CD14-positive monocyte (primary cell): ENCODE measurements at regions of chr19 and their contacts with region 1.

Region 1: GRCh38 chr19:48970923-48971395 is 5.8 kb downstream of the FTL start:
- DNase-seq: peak; percentile 76 to 88 (median 87)
- H3K4me3 ChIP-seq: no peak overlapping the region
- H3K4me3 Mint-ChIP-seq: no peak overlapping the region
- H3K27ac ChIP-seq: no peak overlapping the region
- H3K27ac Mint-ChIP-seq: peak overlapping the region in 2 of 7 donors; percentile 24 to 71
- H3K4me1 ChIP-seq: peaks cover 36 to 45% of the 10 kb centered on the region in 2 donors
- H3K4me1 Mint-ChIP-seq: peaks cover 38% of the 10 kb centered on the region
- H3K27me3 ChIP-seq: no peaks in the 10 kb centered on the region
- H3K27me3 Mint-ChIP-seq: peaks cover 0 to 11% (median 0%) of the 10 kb centered on the region in 3 donors
- CTCF ChIP-seq: peak; percentile 94

Region 2: GRCh38 chr19:48780631-48781391 is 190.1 kb before region 1 on chr19:
- intact Hi-C with region 1: loop called in 1 of 2 experiments (anchors 5 kb)
- DNase-seq: peak; percentile 72 to 91 (median 81)
- H3K4me3 ChIP-seq: no peak overlapping the region
- H3K4me3 Mint-ChIP-seq: peak overlapping the region in 1 of 2 donors; percentile 3
- H3K27ac ChIP-seq: peak overlapping the region; percentile 52 to 69
- H3K27ac Mint-ChIP-seq: peak overlapping the region; percentile 68 to 93 (median 82)
- H3K4me1 ChIP-seq: peaks cover 17% of the 10 kb centered on the region in 2 donors
- H3K4me1 Mint-ChIP-seq: peaks cover 25% of the 10 kb centered on the region
- H3K27me3 ChIP-seq: no peaks in the 10 kb centered on the region
- H3K27me3 Mint-ChIP-seq: peaks cover 0 to 15% (median 7%) of the 10 kb centered on the region in 3 donors
- CTCF ChIP-seq: no peak

Region 3: GRCh38 chr19:48795055-48795684 is 175.8 kb before region 1 on chr19:
- intact Hi-C with region 1: loop called in 1 of 2 experiments (anchors 5 kb)
- DNase-seq: peak; percentile 90 to 93 (median 92)
- H3K4me3 ChIP-seq: peak overlapping the region; percentile 37 to 89 (median 68)
- H3K4me3 Mint-ChIP-seq: peak overlapping the region; percentile 94 to 99
- H3K27ac ChIP-seq: peak overlapping the region; percentile 13 to 76
- H3K27ac Mint-ChIP-seq: peak overlapping the region; percentile 81 to 95 (median 88)
- H3K4me1 ChIP-seq: peaks cover 4 to 6% of the 10 kb centered on the region in 2 donors
- H3K4me1 Mint-ChIP-seq: peaks cover 6% of the 10 kb centered on the region
- H3K27me3 ChIP-seq: no peaks in the 10 kb centered on the region
- H3K27me3 Mint-ChIP-seq: peaks cover under 1 to 4% (median 2%) of the 10 kb centered on the region in 3 donors
- CTCF ChIP-seq: peak; percentile 99

Region 4: GRCh38 chr19:48899781-48900476 is 71.0 kb before region 1 on chr19 and contains the start of gene NUCB1:
- intact Hi-C with region 1: loop called in 1 of 2 experiments (anchors 5 kb)
- DNase-seq: peak; percentile 93 to 97 (median 94)
- H3K4me3 ChIP-seq: peak within 1 kb of the TSS; percentile 66 to 100 (median 79)
- H3K4me3 Mint-ChIP-seq: peak within 1 kb of the TSS; percentile 91 to 96
- H3K27ac ChIP-seq: peak within 1 kb of the TSS; percentile 85
- H3K27ac Mint-ChIP-seq: peak within 1 kb of the TSS; percentile 92 to 98 (median 97)
- H3K4me1 ChIP-seq: peaks cover 35 to 46% of the 10 kb centered on the region in 2 donors
- H3K4me1 Mint-ChIP-seq: peaks cover 32% of the 10 kb centered on the region
- H3K27me3 ChIP-seq: peaks cover 4 to 20% of the 10 kb centered on the region in 2 donors
- H3K27me3 Mint-ChIP-seq: peaks cover 25 to 29% (median 28%) of the 10 kb centered on the region in 3 donors
- CTCF ChIP-seq: no peak
- polyA plus RNA-seq, gene NUCB1: 80.9 to 178 (median 108) TPM

Region 5: GRCh38 chr19:48926909-48927308 is 44.0 kb before region 1 on chr19:
- intact Hi-C with region 1: no loop called
- DNase-seq: peak in 2 of 3 donors; percentile 4 to 46
- H3K4me3 ChIP-seq: no peak overlapping the region
- H3K4me3 Mint-ChIP-seq: no peak overlapping the region
- H3K27ac ChIP-seq: no peak overlapping the region
- H3K27ac Mint-ChIP-seq: peak overlapping the region in 1 of 7 donors; percentile 54
- H3K4me1 ChIP-seq: peaks cover 0 to 3% of the 10 kb centered on the region in 2 donors
- H3K4me1 Mint-ChIP-seq: peaks cover 7% of the 10 kb centered on the region
- H3K27me3 ChIP-seq: no peaks in the 10 kb centered on the region
- H3K27me3 Mint-ChIP-seq: peaks cover 9 to 30% (median 9%) of the 10 kb centered on the region in 3 donors
- CTCF ChIP-seq: no peak

Region 6: DNA sequence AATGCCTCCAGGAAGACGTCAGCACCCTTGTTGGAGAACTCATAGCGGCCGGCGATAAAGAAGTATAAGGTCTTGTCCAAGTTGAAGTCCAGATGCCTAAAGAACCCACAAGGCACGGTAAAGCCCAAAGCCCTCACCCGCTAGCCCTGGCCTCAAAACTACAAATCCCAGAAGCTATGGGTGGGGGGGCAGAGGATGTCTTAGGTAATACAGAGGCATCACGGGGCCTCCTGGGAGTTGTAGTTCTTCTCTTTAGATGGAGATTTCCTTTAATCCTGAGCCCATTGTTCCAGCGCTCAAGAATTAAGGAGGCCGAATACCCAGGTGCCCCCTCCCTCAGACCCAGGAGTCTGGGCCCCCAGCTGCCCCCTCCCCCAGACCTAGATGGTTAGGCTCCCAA is 11.3 kb after region 1 on chr19:
- intact Hi-C with region 1: no loop called
- DNase-seq: no peak
- H3K4me3 ChIP-seq: no peak overlapping the region
- H3K4me3 Mint-ChIP-seq: no peak overlapping the region
- H3K27ac ChIP-seq: no peak overlapping the region
- H3K27ac Mint-ChIP-seq: peak overlapping the region in 2 of 7 donors; percentile 40 to 54
- H3K4me1 ChIP-seq: no peaks in the 10 kb centered on the region
- H3K4me1 Mint-ChIP-seq: no peaks in the 10 kb centered on the region
- H3K27me3 ChIP-seq: no peaks in the 10 kb centered on the region
- H3K27me3 Mint-ChIP-seq: peaks cover 0 to 3% (median 0%) of the 10 kb centered on the region in 3 donors
- CTCF ChIP-seq: no peak